A673 (cell line): ENCODE measurements at regions of chr5 and their contacts with region 1.

Region 1: DNA sequence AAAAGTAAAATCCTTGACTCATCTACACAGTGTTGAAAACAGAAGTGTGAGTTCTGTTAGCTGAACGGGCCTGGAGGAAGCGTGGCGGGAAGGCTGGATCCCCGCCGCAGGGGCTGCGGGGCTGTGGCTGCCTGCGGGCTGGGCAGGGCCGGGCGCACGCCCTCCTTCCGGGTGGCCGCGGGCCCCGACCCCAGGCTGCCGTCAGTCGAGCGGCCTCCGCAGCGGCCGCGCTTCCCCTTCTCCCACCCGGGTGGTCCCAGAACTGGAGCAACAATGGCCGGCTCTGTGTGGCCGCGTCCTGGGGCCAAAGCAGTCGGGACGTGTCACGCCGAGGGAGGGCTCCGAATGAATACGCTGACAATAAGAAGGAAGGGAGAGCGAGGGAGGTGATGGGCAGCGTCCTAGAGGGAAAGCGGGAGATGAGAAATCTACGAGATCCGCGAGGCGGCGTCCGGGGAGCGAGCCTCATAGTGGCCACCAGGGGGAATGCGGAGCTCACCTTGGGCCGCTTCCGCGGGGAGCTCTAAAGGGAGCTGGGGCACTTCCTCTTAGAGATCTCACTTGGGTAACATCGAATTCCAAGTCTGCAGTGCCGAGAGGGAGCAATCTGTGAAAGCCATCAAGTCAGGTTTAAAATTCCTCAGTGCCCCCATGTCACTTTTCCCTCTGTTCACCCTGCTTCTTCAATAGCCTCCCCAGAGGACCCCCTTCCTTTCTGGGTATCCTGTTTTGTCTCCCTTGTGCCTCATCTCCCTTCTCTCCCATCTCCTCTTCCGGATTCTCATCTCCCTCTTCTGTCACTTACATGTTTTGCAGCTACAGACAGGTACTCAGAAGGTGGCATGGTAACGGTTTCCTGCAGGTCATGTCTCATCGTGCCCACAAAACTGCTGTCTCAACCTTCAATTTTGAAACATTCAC is 83.9 kb downstream of the SLC1A3 start:
- DNase-seq: peak; percentile 90
- H3K4me3 ChIP-seq: peak overlapping the region; percentile 57
- H3K27ac ChIP-seq: peak overlapping the region; percentile 60
- H3K4me1 ChIP-seq: peaks cover 9% of the 10 kb centered on the region
- H3K27me3 ChIP-seq: no peaks in the 10 kb centered on the region
- CTCF ChIP-seq: peak; percentile 84

Region 2: GRCh38 chr5:36269479-36270219 is 420.7 kb before region 1 on chr5:
- CTCF ChIA-PET with region 1: no interaction called
- POLR2A ChIA-PET with region 1: no interaction called
- intact Hi-C with region 1: loop called (anchors 5 kb)
- DNase-seq: no peak
- H3K4me3 ChIP-seq: no peak overlapping the region
- H3K27ac ChIP-seq: no peak overlapping the region
- H3K4me1 ChIP-seq: peaks cover 10% of the 10 kb centered on the region
- H3K27me3 ChIP-seq: no peaks in the 10 kb centered on the region
- CTCF ChIP-seq: no peak

Region 3: DNA sequence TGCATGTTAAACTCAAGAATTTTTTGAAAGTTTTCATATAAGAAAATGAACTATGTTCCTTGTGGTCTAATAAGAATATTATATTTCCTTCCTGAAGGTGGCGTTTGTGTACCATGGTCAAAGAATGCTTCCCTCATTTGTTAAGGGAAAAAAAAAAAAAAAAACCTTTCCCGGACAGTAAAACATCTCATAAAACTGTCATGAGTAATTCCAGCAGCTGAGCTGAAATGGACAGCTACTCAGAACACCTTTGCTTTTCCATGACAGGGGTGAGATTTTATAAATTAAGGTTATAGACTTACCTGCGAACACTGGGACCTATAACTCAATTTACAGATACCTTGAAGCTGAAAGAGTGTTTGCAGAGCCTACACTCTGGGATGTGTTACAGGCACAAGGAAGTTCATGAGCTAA is 275.4 kb before region 1 on chr5:
- CTCF ChIA-PET with region 1: interaction called, 10 read pairs
- POLR2A ChIA-PET with region 1: no interaction called
- intact Hi-C with region 1: loop called (anchors 1 kb)
- DNase-seq: peak; percentile 75
- H3K4me3 ChIP-seq: no peak overlapping the region
- H3K27ac ChIP-seq: no peak overlapping the region
- H3K4me1 ChIP-seq: no peaks in the 10 kb centered on the region
- H3K27me3 ChIP-seq: no peaks in the 10 kb centered on the region
- CTCF ChIP-seq: peak; percentile 66

Region 4: GRCh38 chr5:36507332-36507952 is 182.9 kb before region 1 on chr5:
- CTCF ChIA-PET with region 1: no interaction called
- POLR2A ChIA-PET with region 1: no interaction called
- intact Hi-C with region 1: loop called (anchors 2 kb)
- DNase-seq: peak; percentile 85
- H3K4me3 ChIP-seq: no peak overlapping the region
- H3K27ac ChIP-seq: no peak overlapping the region
- H3K4me1 ChIP-seq: no peaks in the 10 kb centered on the region
- H3K27me3 ChIP-seq: no peaks in the 10 kb centered on the region
- CTCF ChIP-seq: peak; percentile 88

Region 5: GRCh38 chr5:36606428-36607113 is 83.7 kb before region 1 on chr5 and contains the start of gene SLC1A3:
- CTCF ChIA-PET with region 1: no interaction called
- POLR2A ChIA-PET with region 1: no interaction called
- intact Hi-C with region 1: loop called (anchors 5 kb)
- DNase-seq: peak; percentile 93
- H3K4me3 ChIP-seq: peak within 1 kb of the TSS; percentile 71
- H3K27ac ChIP-seq: peak within 1 kb of the TSS; percentile 79
- H3K4me1 ChIP-seq: peaks cover 23% of the 10 kb centered on the region
- H3K27me3 ChIP-seq: no peaks in the 10 kb centered on the region
- CTCF ChIP-seq: no peak
- total RNA-seq, gene SLC1A3: 20.5 and 28.9 TPM in 2 replicates

Region 6: DNA sequence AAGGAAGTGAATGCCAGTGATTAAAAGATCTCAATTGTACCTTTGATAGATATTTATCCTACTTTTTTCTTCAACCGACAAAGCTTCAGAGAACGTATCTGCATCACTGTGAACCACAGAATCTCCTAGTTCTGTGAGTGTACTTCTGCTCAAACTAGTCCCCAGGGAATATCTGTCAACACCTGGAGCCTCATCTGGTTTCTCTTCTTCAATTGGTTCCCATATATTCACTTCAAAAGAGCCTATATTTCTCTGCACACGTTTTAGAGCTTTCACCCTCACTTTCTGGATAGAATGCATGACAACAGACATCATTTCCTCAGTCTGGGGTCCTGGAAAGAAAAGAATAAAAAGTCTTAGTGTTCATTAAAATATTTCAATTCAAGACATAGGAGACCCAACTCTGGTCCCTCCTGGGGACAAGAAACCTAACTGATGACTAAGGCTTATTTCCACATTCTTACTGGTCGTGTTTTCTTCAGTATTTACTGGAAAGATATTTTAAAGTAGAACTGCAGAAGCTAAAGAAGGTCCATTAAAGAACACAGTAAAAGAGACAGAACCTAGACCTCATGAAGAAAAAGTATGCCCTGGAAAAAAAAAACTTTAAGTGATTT is 494.6 kb after region 1 on chr5:
- CTCF ChIA-PET with region 1: no interaction called
- POLR2A ChIA-PET with region 1: no interaction called
- intact Hi-C with region 1: no loop called
- DNase-seq: no peak
- H3K4me3 ChIP-seq: no peak overlapping the region
- H3K27ac ChIP-seq: no peak overlapping the region
- H3K4me1 ChIP-seq: no peaks in the 10 kb centered on the region
- H3K27me3 ChIP-seq: no peaks in the 10 kb centered on the region
- CTCF ChIP-seq: no peak